ENCODE measurements at regions of chr11 and their contacts with region 1.

Region 1: DNA sequence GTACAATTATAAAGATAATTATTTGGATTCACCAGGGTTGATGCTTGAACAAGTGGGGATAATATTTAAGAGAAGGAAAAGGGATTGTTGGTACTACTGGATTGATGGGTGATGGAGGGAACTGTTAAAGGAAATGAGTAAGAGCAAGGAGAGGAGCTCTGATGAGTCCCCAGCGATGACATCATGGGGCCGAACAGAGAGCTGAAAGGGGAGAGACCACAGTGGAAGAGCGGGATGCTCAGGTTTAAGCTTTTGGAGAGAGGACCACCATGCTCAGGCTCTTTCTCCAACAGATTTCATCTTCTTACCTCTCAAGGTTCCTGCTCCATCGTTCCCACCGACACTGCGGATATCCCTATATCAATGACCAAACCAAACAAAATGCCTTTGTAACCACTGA is 568.7 kb downstream of the ETS1 start:
- DNase-seq: peak; percentile 33
- H3K4me3 ChIP-seq: no peak overlapping the region
- H3K27ac ChIP-seq: no peak overlapping the region
- H3K4me1 ChIP-seq: peaks cover 14% of the 10 kb centered on the region
- H3K27me3 ChIP-seq: no peaks in the 10 kb centered on the region

Region 2: DNA sequence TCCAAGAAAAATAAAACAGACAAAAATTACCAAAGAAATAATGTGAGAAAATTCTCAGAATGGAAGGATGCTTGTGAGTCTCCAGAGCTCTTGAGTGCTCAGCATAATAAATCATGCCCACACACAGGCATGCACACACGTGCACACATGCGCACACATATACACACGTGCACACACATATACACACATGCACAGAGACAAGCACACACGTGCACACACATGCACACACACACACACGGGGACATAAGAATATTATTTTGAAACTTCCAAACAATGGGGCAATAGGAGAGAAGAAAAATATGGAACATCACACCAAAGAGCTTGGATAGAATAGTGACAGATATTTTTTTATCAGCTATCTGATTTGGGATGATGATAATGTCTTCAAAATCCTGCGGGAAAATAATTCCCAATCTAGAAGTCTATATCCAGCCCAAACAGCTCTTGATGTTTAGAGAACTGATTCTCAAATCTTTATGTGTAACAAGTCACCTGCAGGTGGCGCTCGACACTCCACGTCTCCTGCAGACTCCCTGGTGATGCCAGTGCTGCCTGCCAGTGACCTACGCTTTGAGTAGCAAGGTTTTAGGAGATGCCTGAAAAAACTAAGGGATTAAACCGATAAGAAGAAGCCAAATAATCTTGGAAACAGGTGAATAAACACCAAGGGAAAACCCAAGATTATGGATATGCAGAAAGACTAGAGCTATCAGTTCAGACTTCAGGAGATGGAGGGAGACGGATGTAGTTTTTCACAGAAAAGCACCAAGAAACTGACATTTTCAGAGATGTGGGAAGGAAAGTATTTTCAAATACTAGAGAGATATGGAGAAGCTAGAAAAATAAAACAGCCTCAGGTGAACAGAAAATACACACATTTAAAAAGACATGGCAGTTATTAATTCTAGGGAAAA is 175.0 kb before region 1 on chr11:
- in situ Hi-C with region 1: loop called (anchors 10 kb)
- DNase-seq: peak; percentile 88
- H3K4me3 ChIP-seq: no peak overlapping the region
- H3K27ac ChIP-seq: no peak overlapping the region
- H3K4me1 ChIP-seq: peaks cover 5% of the 10 kb centered on the region; the same call in 1 of the 2 replicates
- H3K27me3 ChIP-seq: no peaks in the 10 kb centered on the region; the same call in 1 of the 2 replicates